Activated T-helper 1 cell treated with anti-CD3 and anti-CD28 coated beads, Interleukin-12 subunit alpha, Interleukin-12 subunit beta, Interleukin-2, Interleukin-4 antibody, amounts not matched to agents 30 ng/mL and 10 ng/mL and 1 ng/mL, durations not matched to agents 14 hours and 24 hours and 36 hours (primary cell): ENCODE measurements at regions of chr2 and their contacts with region 1.

Region 1: DNA sequence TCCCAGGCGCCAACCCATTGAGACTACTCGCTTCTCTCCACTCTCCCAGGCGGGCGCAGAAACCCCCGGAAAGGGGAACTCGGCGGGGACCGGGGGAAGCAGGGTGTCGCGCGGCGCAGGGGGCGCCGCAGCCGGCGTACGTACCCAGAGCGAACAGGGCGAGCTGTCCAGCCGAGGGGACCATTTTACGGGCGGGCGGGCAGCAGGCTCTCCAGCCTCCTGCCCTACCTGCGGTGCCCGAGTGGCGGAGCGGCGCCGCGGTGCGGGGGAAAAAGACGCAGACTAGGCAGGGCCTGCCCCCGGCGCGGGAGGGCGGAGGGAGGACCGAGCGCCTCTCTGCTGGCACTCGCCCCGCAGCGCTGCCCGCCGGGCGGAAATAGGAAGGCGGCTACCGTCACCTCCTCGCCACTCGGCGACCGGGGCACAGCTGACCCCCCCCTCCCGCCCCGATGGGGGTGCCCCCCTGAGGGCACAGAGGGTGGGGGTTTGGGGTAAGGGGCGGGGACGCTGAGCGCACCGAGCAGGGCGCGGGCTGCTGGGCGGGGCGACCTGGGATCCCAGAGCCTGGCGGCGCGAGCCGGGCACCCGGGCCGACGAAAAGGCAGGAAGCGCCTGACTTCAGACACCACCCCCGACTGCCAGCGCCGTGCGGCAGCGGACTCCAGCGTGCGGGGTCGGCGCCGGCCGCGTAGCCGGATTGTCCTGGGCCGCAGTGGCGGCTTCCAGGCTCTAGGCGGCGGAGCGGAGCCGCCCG is at the start of gene TGFA:
- DNase-seq: peak; percentile 46
- H3K4me3 Mint-ChIP-seq: peak within 1 kb of the TSS; percentile 82
- H3K27ac Mint-ChIP-seq: no peak within 1 kb of the TSS
- H3K4me1 Mint-ChIP-seq: peaks cover 24% of the 10 kb centered on the region
- H3K27me3 Mint-ChIP-seq: peaks cover 45% of the 10 kb centered on the region
- total RNA-seq, gene TGFA: not detected in 2 replicates

Region 2: GRCh38 chr2:70145816-70146733 is 407.7 kb before region 1 on chr2:
- intact Hi-C with region 1: no loop called
- DNase-seq: peak; percentile 51
- H3K4me3 Mint-ChIP-seq: peak overlapping the region; percentile 27
- H3K27ac Mint-ChIP-seq: peak overlapping the region; percentile 20
- H3K4me1 Mint-ChIP-seq: peaks cover 40% of the 10 kb centered on the region
- H3K27me3 Mint-ChIP-seq: no peaks in the 10 kb centered on the region

Region 3: DNA sequence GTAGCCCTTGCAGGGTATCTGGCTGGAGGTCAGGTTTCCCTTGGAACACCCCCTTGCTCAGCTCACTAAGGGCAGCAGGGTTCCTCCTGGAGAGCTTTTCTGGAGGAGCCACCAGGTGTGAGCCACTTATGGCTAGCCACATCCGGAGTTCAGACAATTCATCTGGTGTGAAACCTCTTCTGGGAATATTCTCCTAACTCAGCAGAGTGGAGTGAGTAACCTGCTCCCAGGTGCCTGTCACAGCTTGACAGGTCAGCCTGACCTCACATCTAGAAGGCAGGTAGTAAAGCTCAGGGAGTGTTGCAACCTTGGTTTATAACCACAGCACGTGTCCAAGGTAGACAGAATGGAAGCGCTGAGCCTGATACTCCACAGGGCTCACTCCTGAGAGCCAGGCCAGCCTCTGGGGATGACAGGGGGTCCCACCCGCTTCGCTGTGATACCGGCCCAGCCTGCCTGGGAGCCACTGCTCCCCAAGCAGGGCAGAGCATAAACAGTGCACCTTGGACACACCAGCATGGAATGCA is 62.5 kb after region 1 on chr2:
- intact Hi-C with region 1: loop called (anchors 1 kb)
- DNase-seq: no peak
- H3K4me3 Mint-ChIP-seq: no peak overlapping the region
- H3K27ac Mint-ChIP-seq: no peak overlapping the region
- H3K4me1 Mint-ChIP-seq: peaks cover 6% of the 10 kb centered on the region
- H3K27me3 Mint-ChIP-seq: peaks cover 11% of the 10 kb centered on the region